Mammary epithelial cell (primary cell): ENCODE measurements at regions of chr3 and their contacts with region 1.

Region 1: DNA sequence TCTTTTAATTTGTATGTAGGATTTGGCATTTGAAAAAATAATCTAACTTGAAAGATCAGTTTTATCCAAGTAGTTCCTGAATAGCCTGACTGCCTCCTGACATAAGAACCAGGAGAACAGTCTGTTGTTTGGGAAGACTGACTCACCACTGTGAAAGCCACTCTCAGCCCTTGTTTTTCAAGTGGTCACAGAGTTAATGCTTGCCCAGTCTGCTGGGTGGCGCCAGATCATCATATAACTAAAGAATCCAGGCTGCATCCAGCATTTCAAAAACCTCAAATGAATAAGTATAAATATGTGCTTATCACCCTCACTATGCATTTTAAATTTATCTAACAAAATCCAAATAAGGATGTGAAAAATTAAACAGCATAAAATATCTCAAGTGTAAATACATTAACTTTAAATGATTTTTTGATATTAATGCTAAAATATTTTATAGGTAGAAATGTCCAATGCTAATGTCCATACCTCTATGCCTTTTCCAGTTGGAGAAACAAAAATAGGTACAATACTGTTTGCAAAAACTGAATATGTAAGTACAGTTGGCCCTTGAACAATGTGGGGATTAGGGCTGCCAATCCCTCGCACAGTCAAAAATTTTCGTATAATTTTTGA is 26.9 kb upstream of the ZBBX start:
- DNase-seq: peak; percentile 53
- H3K4me3 ChIP-seq: no peak overlapping the region
- H3K27ac ChIP-seq: no peak overlapping the region
- H3K4me1 ChIP-seq: no peaks in the 10 kb centered on the region
- H3K27me3 ChIP-seq: no peaks in the 10 kb centered on the region
- CTCF ChIP-seq: peak; percentile 60 to 75

Region 2: GRCh38 chr3:167626490-167626889 is 219.5 kb after region 1 on chr3:
- CTCF ChIA-PET with region 1: no interaction called
- dilution Hi-C with region 1: no loop called
- in situ Hi-C with region 1: loop called in 1 of 2 experiments (anchors 25 kb)
- intact Hi-C with region 1: no loop called
- DNase-seq: no peak
- H3K4me3 ChIP-seq: no peak overlapping the region
- H3K27ac ChIP-seq: no peak overlapping the region
- H3K4me1 ChIP-seq: no peaks in the 10 kb centered on the region
- H3K27me3 ChIP-seq: peaks cover 2% of the 10 kb centered on the region
- CTCF ChIP-seq: no peak

Region 3: DNA sequence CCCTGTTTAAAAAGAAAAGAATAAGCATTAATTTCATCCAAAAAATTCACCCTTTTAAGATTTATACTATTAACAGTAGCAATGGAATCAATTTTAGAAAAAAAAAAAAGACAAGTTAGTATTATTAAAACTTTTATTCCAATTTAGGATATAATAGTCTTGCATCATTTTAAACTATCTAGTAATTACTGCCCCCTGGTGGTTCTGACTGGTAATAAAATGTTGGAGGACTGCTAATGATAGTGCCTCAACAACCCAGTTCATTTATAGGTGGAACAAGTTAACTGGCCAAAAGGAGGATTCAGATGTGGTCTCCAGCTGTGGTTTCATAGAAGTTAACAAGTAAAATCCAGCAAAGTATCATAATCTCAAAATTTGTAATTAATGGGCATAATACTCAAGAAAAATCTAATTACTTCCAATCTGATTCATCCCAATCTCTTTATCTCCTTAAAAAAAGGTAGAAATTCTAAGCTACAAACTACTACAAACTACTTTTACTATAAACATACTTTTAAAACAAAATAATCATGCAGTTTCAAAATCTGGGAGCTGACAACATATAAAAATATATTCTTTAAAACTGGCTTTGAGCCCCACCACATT is 277.5 kb after region 1 on chr3:
- CTCF ChIA-PET with region 1: no interaction called
- dilution Hi-C with region 1: no loop called
- in situ Hi-C with region 1: no loop called
- intact Hi-C with region 1: loop called (anchors 1 kb)
- DNase-seq: peak; percentile 42
- H3K4me3 ChIP-seq: no peak overlapping the region
- H3K27ac ChIP-seq: no peak overlapping the region
- H3K4me1 ChIP-seq: no peaks in the 10 kb centered on the region
- H3K27me3 ChIP-seq: no peaks in the 10 kb centered on the region
- CTCF ChIP-seq: peak; percentile 54 to 58

Region 4: DNA sequence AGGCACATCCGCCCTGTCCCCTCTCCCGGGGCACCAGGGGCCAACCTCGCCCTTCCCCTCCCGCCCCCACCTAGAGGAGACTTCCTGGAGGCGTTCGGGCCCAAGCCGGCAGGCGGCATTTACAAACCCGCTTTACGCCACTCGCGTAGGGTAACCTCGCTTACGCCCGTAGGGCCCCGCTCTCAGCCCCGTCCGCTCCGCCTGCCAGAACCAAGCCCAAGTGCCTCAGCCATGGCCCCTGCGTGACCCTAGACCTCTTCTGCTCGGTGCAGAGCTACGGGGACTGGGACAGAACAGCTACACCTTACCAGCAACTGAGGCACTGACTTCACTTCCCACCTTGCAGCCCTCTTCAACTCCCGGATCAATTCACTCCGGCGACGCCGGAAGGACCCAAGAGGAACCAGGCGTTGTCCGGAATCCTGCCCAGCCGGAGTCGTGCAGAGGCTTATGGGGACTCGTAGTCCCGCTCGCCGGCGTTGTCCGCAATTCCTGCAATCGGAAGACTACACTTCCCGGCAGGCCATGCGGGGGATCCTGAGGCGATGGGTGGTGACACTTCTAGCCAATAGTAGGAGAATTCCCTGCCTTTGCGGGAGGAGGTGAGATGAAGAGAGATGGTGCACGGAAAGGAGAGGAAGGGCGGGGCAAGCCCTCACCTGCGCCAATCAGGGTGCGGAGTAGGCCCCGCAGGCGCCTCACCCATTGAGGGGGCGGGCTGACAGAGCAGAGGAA is 327.7 kb after region 1 on chr3 and contains the start of gene PDCD10:
- CTCF ChIA-PET with region 1: no interaction called
- dilution Hi-C with region 1: no loop called
- in situ Hi-C with region 1: no loop called
- intact Hi-C with region 1: loop called (anchors 2 kb)
- DNase-seq: peak; percentile 99
- H3K4me3 ChIP-seq: peak within 1 kb of the TSS; percentile 84 to 97 (median 89)
- H3K27ac ChIP-seq: peak within 1 kb of the TSS; percentile 79
- H3K4me1 ChIP-seq: no peaks in the 10 kb centered on the region
- H3K27me3 ChIP-seq: no peaks in the 10 kb centered on the region
- CTCF ChIP-seq: no peak
- total RNA-seq, gene PDCD10: 70.8 to 76.1 TPM

Region 5: DNA sequence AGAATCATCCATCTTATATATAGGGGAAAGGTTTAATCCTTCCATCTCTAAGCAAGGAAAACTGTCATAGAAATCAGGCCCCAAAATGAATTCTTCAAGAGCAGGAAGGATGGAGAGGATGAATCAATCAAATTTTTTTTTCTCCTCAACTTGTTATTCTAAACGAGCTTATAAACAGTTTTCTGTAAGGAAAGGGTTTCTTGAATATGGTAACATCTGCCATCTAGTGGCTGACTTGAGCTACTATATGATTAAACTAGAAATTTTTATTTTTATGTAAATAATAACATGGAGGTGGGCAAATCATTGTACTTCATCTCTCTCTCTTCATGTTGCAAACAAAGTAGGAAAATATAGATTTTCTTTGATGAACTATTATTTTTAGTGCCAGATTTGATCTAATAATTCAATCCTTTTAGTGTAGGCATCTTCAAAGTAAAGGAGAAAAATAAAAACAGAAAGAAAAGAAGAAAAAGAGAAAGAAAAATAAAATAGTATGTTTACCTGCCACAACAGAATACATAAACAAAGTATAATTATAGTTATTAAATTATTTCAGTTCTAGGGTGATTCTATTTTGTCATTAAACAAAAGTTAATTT is 475.2 kb after region 1 on chr3:
- CTCF ChIA-PET with region 1: interaction called, 6 read pairs
- dilution Hi-C with region 1: no loop called
- in situ Hi-C with region 1: loop called (anchors 25 kb)
- intact Hi-C with region 1: loop called (anchors 1 kb)
- DNase-seq: peak; percentile 19
- H3K4me3 ChIP-seq: no peak overlapping the region
- H3K27ac ChIP-seq: no peak overlapping the region
- H3K4me1 ChIP-seq: no peaks in the 10 kb centered on the region
- H3K27me3 ChIP-seq: no peaks in the 10 kb centered on the region
- CTCF ChIP-seq: peak; percentile 49 to 64

Region 6: GRCh38 chr3:168040607-168041208 is 633.7 kb after region 1 on chr3:
- CTCF ChIA-PET with region 1: no interaction called
- dilution Hi-C with region 1: no loop called
- in situ Hi-C with region 1: no loop called
- intact Hi-C with region 1: loop called (anchors 2 kb)
- DNase-seq: peak; percentile 29
- H3K4me3 ChIP-seq: no peak overlapping the region
- H3K27ac ChIP-seq: no peak overlapping the region
- H3K4me1 ChIP-seq: no peaks in the 10 kb centered on the region
- H3K27me3 ChIP-seq: no peaks in the 10 kb centered on the region
- CTCF ChIP-seq: peak; percentile 54 to 76